B cell (primary cell): ENCODE measurements at regions of chr5 and their contacts with region 1.

Region 1: GRCh38 chr5:17907094-17907493 is 272.8 kb downstream of the TAF11L14 start:
- DNase-seq: no peak
- ATAC-seq: no peak
- H3K4me3 ChIP-seq: no peak overlapping the region
- H3K4me3 Mint-ChIP-seq: no peak overlapping the region
- H3K27ac ChIP-seq: no peak overlapping the region
- H3K27ac Mint-ChIP-seq: no peak overlapping the region
- H3K4me1 ChIP-seq: no peaks in the 10 kb centered on the region
- H3K4me1 Mint-ChIP-seq: no peaks in the 10 kb centered on the region
- H3K27me3 ChIP-seq: no peaks in the 10 kb centered on the region
- H3K27me3 Mint-ChIP-seq: no peaks in the 10 kb centered on the region
- CTCF ChIP-seq: no peak

Region 2: GRCh38 chr5:17238521-17239041 is 668.5 kb before region 1 on chr5:
- CTCF ChIA-PET with region 1: no interaction called
- POLR2A ChIA-PET with region 1: no interaction called
- intact Hi-C with region 1: no loop called
- DNase-seq: no peak
- ATAC-seq: no peak
- H3K4me3 ChIP-seq: no peak overlapping the region
- H3K4me3 Mint-ChIP-seq: peak overlapping the region; percentile 15
- H3K27ac ChIP-seq: peak overlapping the region in 1 of 2 donors; percentile 19
- H3K27ac Mint-ChIP-seq: peak overlapping the region; percentile 18
- H3K4me1 ChIP-seq: peaks cover 37 to 38% of the 10 kb centered on the region in 2 donors
- H3K4me1 Mint-ChIP-seq: peaks cover 73% of the 10 kb centered on the region
- H3K27me3 ChIP-seq: no peaks in the 10 kb centered on the region
- H3K27me3 Mint-ChIP-seq: no peaks in the 10 kb centered on the region
- CTCF ChIP-seq: no peak

Region 3: GRCh38 chr5:17918373-17919104 is 11.4 kb after region 1 on chr5:
- CTCF ChIA-PET with region 1: no interaction called
- POLR2A ChIA-PET with region 1: no interaction called
- intact Hi-C with region 1: no loop called
- DNase-seq: no peak
- ATAC-seq: no peak
- H3K4me3 ChIP-seq: no peak overlapping the region
- H3K4me3 Mint-ChIP-seq: no peak overlapping the region
- H3K27ac ChIP-seq: no peak overlapping the region
- H3K27ac Mint-ChIP-seq: no peak overlapping the region
- H3K4me1 ChIP-seq: no peaks in the 10 kb centered on the region
- H3K4me1 Mint-ChIP-seq: no peaks in the 10 kb centered on the region
- H3K27me3 ChIP-seq: no peaks in the 10 kb centered on the region
- H3K27me3 Mint-ChIP-seq: no peaks in the 10 kb centered on the region
- CTCF ChIP-seq: no peak

Region 4: DNA sequence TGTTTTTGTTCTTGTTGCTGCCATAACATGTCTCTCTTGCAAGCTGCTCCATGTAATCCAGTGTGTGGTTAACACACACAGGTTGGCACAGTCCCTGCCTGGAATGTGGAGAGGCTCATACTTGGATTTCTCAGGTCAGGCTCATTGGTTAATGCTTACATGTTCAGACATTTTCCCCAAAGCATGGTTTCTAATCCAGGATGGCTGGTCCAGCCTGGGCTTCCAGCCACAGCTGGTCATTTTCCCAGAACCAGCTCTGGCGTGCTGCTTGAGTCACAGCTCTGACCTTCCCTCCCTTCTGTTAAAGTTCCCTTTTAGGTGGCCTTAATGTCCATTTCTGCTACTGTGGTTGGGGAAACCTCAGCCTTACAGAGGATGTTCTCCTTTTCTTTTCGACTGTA is 21.5 kb after region 1 on chr5:
- CTCF ChIA-PET with region 1: no interaction called
- POLR2A ChIA-PET with region 1: no interaction called
- intact Hi-C with region 1: loop called (anchors 2 kb)
- DNase-seq: no peak
- ATAC-seq: no peak
- H3K4me3 ChIP-seq: no peak overlapping the region
- H3K4me3 Mint-ChIP-seq: no peak overlapping the region
- H3K27ac ChIP-seq: no peak overlapping the region
- H3K27ac Mint-ChIP-seq: no peak overlapping the region
- H3K4me1 ChIP-seq: no peaks in the 10 kb centered on the region
- H3K4me1 Mint-ChIP-seq: no peaks in the 10 kb centered on the region
- H3K27me3 ChIP-seq: no peaks in the 10 kb centered on the region
- H3K27me3 Mint-ChIP-seq: peaks cover 12% of the 10 kb centered on the region
- CTCF ChIP-seq: no peak